ENCODE measurements at regions of chr9 and their contacts with region 1.

Region 1: GRCh38 chr9:72280913-72281500 is 84.0 kb downstream of the ZFAND5 start:
- DNase-seq: peak; percentile 29 to 38
- H3K4me3 ChIP-seq: no peak overlapping the region
- H3K4me3 Mint-ChIP-seq: no peak overlapping the region
- H3K27ac Mint-ChIP-seq: no peak overlapping the region
- H3K4me1 ChIP-seq: no peaks in the 10 kb centered on the region
- H3K4me1 Mint-ChIP-seq: no peaks in the 10 kb centered on the region
- H3K27me3 ChIP-seq: no peaks in the 10 kb centered on the region
- H3K27me3 Mint-ChIP-seq: no peaks in the 10 kb centered on the region
- CTCF ChIP-seq: peak; percentile 38 to 55

Region 2: GRCh38 chr9:72203205-72203803 is 77.7 kb before region 1 on chr9:
- CTCF ChIA-PET with region 1: no interaction called
- POLR2A ChIA-PET with region 1: no interaction called
- intact Hi-C with region 1: no loop called
- DNase-seq: peak in 1 of 2 experiments; percentile 11
- H3K4me3 ChIP-seq: no peak overlapping the region
- H3K4me3 Mint-ChIP-seq: no peak overlapping the region
- H3K27ac Mint-ChIP-seq: no peak overlapping the region
- H3K4me1 ChIP-seq: no peaks in the 10 kb centered on the region
- H3K4me1 Mint-ChIP-seq: peaks cover 12% of the 10 kb centered on the region
- H3K27me3 ChIP-seq: no peaks in the 10 kb centered on the region
- H3K27me3 Mint-ChIP-seq: no peaks in the 10 kb centered on the region
- CTCF ChIP-seq: peak; percentile 27 to 37

Region 3: GRCh38 chr9:72292256-72292682 is 11.3 kb after region 1 on chr9:
- CTCF ChIA-PET with region 1: no interaction called
- POLR2A ChIA-PET with region 1: no interaction called
- intact Hi-C with region 1: no loop called
- DNase-seq: no peak
- H3K4me3 ChIP-seq: no peak overlapping the region
- H3K4me3 Mint-ChIP-seq: no peak overlapping the region
- H3K27ac Mint-ChIP-seq: no peak overlapping the region
- H3K4me1 ChIP-seq: peaks cover 3% of the 10 kb centered on the region; the same call in 1 of the 2 replicates
- H3K4me1 Mint-ChIP-seq: peaks cover 4% of the 10 kb centered on the region
- H3K27me3 ChIP-seq: no peaks in the 10 kb centered on the region
- H3K27me3 Mint-ChIP-seq: no peaks in the 10 kb centered on the region
- CTCF ChIP-seq: no peak

Region 4: GRCh38 chr9:72695365-72695764 is 414.4 kb after region 1 on chr9:
- CTCF ChIA-PET with region 1: no interaction called
- POLR2A ChIA-PET with region 1: no interaction called
- intact Hi-C with region 1: loop called (anchors 1 kb)
- DNase-seq: no peak
- H3K4me3 ChIP-seq: no peak overlapping the region
- H3K4me3 Mint-ChIP-seq: no peak overlapping the region
- H3K27ac Mint-ChIP-seq: no peak overlapping the region
- H3K4me1 ChIP-seq: no peaks in the 10 kb centered on the region
- H3K4me1 Mint-ChIP-seq: no peaks in the 10 kb centered on the region
- H3K27me3 ChIP-seq: no peaks in the 10 kb centered on the region
- H3K27me3 Mint-ChIP-seq: no peaks in the 10 kb centered on the region
- CTCF ChIP-seq: peak in 1 of 2 experiments; percentile 11

Region 5: GRCh38 chr9:72823971-72824370 is 543.0 kb after region 1 on chr9:
- CTCF ChIA-PET with region 1: interaction called, 5 read pairs
- POLR2A ChIA-PET with region 1: no interaction called
- intact Hi-C with region 1: loop called (anchors 5 kb)
- DNase-seq: no peak
- H3K4me3 ChIP-seq: no peak overlapping the region
- H3K4me3 Mint-ChIP-seq: no peak overlapping the region
- H3K27ac Mint-ChIP-seq: no peak overlapping the region
- H3K4me1 ChIP-seq: no peaks in the 10 kb centered on the region
- H3K4me1 Mint-ChIP-seq: no peaks in the 10 kb centered on the region
- H3K27me3 ChIP-seq: no peaks in the 10 kb centered on the region
- H3K27me3 Mint-ChIP-seq: no peaks in the 10 kb centered on the region
- CTCF ChIP-seq: no peak